HepG2 (cell line): ENCODE measurements at regions of chr19 and their contacts with region 1.

Region 1: GRCh38 chr19:55586976-55587668 is 6.5 kb upstream of the ZNF579 start:
- DNase-seq: peak; percentile 93
- ATAC-seq: peak; percentile 86
- H3K4me3 ChIP-seq: peak overlapping the region; percentile 25 to 88 (median 51)
- H3K27ac ChIP-seq: peak overlapping the region; percentile 41
- H3K4me1 ChIP-seq: peaks cover 34% of the 10 kb centered on the region
- H3K27me3 ChIP-seq: no peaks in the 10 kb centered on the region; a peak in 1 of 5 replicates
- CTCF ChIP-seq: no peak
- EP300 ChIP-seq: no peak
- POLR2A ChIP-seq: no peak
- RAD21 ChIP-seq: no peak

Region 2: DNA sequence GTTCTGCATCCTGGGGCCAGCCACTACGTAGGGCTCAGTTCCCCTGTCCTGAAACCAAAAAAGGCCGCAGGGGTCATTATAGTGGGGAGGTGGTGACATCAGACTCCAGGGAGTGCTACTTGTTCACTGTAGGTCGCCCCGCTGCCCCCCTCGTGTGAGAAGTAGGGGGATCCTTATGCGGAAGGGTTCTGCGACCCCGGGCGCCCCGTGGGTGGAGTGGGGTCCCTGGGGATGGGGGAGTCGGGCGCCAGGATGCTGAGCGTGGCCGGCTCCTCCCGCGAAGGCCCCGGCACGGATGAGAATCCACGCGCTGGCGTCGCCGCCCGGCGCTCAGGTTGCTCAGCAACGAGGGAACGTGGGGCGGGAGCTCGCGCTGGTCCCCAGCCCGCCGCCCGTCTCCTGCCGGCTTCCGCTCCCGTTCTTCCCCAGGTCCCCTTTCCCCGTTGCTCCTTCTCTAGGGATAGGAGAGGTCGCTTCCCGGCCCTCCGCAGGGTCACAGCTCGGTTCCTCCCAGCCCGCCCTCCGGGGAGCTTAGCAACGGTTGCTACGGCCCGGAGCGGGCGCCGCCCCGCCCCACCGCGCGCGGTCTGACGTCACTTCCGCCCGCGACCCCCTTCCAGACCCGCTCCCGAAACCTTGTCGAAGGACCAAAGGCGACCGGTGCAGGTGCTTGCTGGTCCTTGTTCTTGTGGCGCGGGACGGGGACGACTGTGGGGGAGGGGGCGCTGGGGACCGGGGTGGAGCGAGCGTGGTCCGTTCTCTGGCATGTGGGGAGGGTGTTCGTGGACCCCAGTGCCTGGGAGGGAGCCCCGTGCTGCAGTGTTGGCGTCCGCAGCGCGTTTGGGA is 102.3 kb before region 1 on chr19 and contains the start of gene NAT14:
- CTCF ChIA-PET with region 1: no interaction called
- POLR2A ChIA-PET with region 1: no interaction called
- in situ Hi-C with region 1: no loop called
- intact Hi-C with region 1: no loop called
- DNase-seq: peak; percentile 39
- ATAC-seq: peak; percentile 33
- H3K4me3 ChIP-seq: peak within 1 kb of the TSS; percentile 62 to 79 (median 69)
- H3K27ac ChIP-seq: peak within 1 kb of the TSS; percentile 33
- H3K4me1 ChIP-seq: peaks cover 33% of the 10 kb centered on the region
- H3K27me3 ChIP-seq: peaks cover 3 to 5% of the 10 kb centered on the region in 2 experiments; a peak in 3 of 5 replicates
- CTCF ChIP-seq: no peak; the same call in 1 of the 2 replicates
- EP300 ChIP-seq: no peak
- POLR2A ChIP-seq: peak in 1 of 2 experiments; percentile 57; a peak in 2 of 4 replicates
- RAD21 ChIP-seq: 0 out of 2 replicates have a peak, but pooled peaks have one; percentile 8
- total RNA-seq, gene NAT14: 14.7 and 22.3 TPM in 2 replicates

Region 3: GRCh38 chr19:55516878-55517620 is 70.1 kb before region 1 on chr19:
- CTCF ChIA-PET with region 1: interaction called, 3 read pairs
- POLR2A ChIA-PET with region 1: no interaction called
- in situ Hi-C with region 1: no loop called
- intact Hi-C with region 1: loop called (anchors 10 kb)
- DNase-seq: peak; percentile 78
- ATAC-seq: peak; percentile 97
- H3K4me3 ChIP-seq: peak overlapping the region; percentile 47 to 79 (median 68)
- H3K27ac ChIP-seq: no peak overlapping the region
- H3K4me1 ChIP-seq: peaks cover 4% of the 10 kb centered on the region; the same call in 1 of the 2 replicates
- H3K27me3 ChIP-seq: peaks cover 0 to 22% of the 10 kb centered on the region in 2 experiments; a peak in 4 of 5 replicates
- CTCF ChIP-seq: peak; percentile 100
- EP300 ChIP-seq: no peak
- POLR2A ChIP-seq: peak in 1 of 2 experiments; percentile 46; a peak in 1 of 4 replicates
- RAD21 ChIP-seq: peak; percentile 98

Region 4: DNA sequence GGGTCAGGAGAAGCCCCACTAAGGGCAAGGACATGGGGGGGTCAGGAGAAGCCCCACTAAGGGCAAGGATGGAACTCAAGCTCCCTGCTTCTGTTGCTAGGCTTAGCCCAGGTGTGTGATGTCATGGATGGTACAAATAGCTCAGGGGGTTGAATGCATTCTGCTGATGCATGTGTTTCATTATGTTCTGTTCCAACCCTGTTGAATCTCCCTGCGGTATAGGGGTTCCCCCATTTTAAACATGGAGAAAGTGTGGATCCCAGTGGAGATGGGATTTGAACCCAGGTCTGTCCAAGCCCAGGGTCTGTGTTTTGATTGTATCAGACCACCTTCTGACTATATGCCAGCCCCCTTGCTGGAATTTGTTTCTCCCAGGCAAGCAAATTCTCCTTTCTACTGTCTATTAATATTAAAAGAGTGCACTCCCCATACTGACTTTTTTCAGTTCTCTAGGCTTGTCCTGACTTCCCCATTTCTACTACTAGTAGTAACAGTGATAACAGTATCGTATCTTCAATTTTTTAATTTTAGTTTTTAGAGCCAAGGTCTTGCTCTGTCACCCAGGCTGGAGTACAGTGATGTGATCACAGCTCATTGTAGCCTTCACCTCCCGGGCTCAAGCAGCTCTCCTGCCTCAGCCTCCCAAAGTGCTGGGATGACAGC is 25.0 kb after region 1 on chr19:
- CTCF ChIA-PET with region 1: no interaction called
- POLR2A ChIA-PET with region 1: no interaction called
- in situ Hi-C with region 1: no loop called
- intact Hi-C with region 1: no loop called
- DNase-seq: no peak
- ATAC-seq: no peak
- H3K4me3 ChIP-seq: no peak overlapping the region
- H3K27ac ChIP-seq: no peak overlapping the region
- H3K4me1 ChIP-seq: peaks cover 9% of the 10 kb centered on the region
- H3K27me3 ChIP-seq: no peaks in the 10 kb centered on the region
- CTCF ChIP-seq: no peak
- EP300 ChIP-seq: no peak
- POLR2A ChIP-seq: no peak
- RAD21 ChIP-seq: no peak

Region 5: GRCh38 chr19:55653758-55654539 is 66.8 kb after region 1 on chr19:
- CTCF ChIA-PET with region 1: no interaction called
- POLR2A ChIA-PET with region 1: no interaction called
- in situ Hi-C with region 1: no loop called
- intact Hi-C with region 1: no loop called
- DNase-seq: peak; percentile 99
- ATAC-seq: peak; percentile 85
- H3K4me3 ChIP-seq: peak overlapping the region; percentile 85 to 99 (median 97)
- H3K27ac ChIP-seq: peak overlapping the region; percentile 99
- H3K4me1 ChIP-seq: peaks cover 30% of the 10 kb centered on the region
- H3K27me3 ChIP-seq: no peaks in the 10 kb centered on the region; a peak in 1 of 5 replicates
- CTCF ChIP-seq: peak; percentile 99
- EP300 ChIP-seq: 0 out of 4 replicates have a peak, but pooled peaks of 1 of the 2 experiments have one; percentile 35
- POLR2A ChIP-seq: peak; percentile 54 to 80; a peak in 3 of 4 replicates
- RAD21 ChIP-seq: peak; percentile 79